Activated T-helper 1 cell treated with anti-CD3 and anti-CD28 coated beads, Interleukin-12 subunit alpha, Interleukin-12 subunit beta, Interleukin-2, Interleukin-4 antibody, amounts not matched to agents 30 ng/mL and 10 ng/mL and 1 ng/mL, durations not matched to agents 14 hours and 24 hours and 36 hours (primary cell): ENCODE measurements at regions of chr2 and their contacts with region 1.

Region 1: DNA sequence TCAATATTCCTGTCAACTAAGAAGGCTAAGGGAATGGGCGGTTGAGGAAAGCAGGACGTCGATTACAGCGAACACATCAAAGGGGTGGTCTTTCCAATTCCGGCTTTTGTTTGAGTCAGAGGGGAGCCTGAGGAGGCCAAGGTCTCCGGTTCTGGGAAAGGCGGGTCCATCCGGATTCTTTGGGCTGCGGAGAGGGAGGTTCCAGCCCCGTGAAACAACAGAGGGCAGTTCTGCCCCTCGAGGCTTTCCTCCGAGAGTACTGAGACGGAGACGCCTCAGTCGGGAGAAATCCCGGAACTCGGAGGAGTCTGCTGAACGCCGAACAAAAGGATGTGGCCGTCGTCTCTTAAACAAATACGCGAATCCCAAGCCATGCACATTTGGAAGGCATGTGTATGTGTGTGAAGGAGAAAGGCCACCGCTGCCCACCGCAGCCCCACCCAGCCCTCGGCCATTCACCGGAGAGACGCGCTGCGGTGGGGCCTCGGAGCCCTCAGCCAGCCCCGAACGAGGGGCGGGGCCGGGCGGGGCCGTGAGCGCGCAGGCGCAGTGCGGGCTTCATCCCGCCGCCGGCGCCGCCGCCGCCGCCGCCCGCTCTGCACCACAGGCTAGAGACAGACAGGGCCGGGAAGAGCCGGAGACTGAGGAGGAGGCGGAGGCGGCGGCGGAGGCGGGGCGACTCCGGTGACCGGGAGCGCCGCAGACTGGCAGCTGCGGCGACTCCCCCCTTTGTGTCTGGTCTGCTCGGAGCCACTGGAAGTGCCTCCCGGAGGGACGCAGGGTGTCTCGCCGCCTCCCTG is at the start of gene BMPR2:
- DNase-seq: peak; percentile 84
- H3K4me3 Mint-ChIP-seq: peak within 1 kb of the TSS; percentile 99
- H3K27ac Mint-ChIP-seq: peak within 1 kb of the TSS; percentile 83
- H3K4me1 Mint-ChIP-seq: peaks cover 31% of the 10 kb centered on the region
- H3K27me3 Mint-ChIP-seq: no peaks in the 10 kb centered on the region
- total RNA-seq, gene BMPR2: 5.5 and 6.1 TPM in 2 replicates

Region 2: DNA sequence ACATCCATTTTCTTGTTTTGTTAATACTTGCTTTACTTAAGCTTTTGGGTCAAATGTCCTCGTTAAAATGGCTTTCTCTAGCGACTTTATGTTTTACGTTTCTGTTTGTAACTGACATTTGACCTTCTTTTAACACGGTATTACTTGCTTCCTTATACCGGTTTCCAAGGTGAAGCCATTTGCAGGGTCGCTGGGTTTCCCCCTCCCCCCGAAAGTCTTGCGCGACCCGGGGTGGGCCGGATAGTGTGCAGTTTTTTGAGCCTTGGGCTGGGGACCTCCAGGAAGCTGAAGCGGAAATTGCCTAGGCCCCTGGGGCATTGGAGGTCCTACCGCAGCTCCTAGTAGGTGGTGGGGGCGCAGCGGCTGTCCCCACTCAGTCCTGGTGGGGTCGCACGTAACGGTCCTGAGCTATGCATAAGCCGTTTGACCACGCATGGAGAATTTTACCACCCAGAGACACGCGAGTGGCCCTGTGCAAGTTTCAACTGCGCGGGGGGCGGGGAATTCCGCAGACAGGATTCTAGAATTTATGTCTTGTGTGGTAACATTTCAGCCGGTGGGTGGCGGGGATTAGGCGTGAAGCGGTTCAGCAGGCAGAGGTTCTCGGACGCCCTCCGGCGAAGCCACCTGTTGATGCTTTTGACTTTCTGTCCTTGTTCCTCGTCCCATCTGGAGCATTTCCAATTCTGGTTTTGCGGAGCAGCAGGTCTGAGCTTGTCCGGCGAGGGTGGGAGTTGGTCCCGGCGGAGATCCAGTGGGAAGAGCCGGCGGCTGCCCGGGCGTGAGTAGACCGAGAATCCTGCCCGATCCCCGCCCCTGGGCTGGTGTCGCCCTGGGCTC is 1257.5 kb before region 1 on chr2:
- intact Hi-C with region 1: loop called (anchors 5 kb)
- DNase-seq: peak; percentile 78
- H3K4me3 Mint-ChIP-seq: peak overlapping the region; percentile 94
- H3K27ac Mint-ChIP-seq: peak overlapping the region; percentile 100
- H3K4me1 Mint-ChIP-seq: peaks cover 65% of the 10 kb centered on the region
- H3K27me3 Mint-ChIP-seq: no peaks in the 10 kb centered on the region

Region 3: DNA sequence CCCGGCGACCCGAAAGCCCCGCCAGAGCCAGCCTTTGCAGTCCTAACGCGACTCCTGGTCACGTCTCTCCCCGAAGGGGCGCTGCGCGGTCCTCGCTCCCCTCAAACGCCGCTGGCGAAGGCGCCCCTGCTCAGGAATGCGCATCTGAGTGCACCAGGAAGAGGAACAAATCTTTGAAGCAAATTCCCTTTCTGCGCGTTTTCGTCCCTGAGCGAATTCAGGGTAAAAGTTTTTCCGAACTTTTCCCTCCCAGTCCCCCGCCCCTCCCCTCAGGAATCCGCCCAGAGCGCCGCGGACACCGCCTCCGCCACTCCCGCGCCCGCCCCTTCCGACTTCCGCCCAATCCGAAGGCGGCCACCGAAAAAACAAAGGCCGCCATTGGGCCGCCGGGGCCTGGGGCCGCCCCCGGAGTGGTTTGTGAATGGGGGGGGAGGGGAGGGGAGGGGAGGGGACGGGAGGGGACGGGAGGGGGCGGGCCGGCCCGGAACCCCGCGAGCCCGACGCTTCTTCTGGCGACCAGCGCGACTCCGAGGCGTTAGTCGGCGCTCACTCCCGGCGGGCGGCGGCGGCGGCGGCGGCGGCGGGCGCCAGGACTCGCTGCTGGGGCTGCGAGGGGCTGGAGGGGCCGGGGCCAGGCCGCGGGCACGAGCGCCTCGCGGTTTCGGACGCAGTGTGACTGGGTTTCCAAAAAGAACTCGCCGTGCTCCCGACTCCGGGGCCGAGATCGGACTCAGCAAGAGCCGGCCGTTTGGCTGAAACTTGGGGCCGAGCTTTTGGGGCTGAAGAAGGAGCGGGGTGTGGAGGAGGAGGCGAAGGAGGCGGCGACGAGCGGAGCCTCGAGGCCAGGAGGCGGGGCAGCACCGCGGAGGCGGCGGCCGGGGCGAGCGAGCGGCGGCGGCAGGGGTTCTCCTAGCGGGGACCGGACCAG is 342.2 kb before region 1 on chr2 and contains the start of gene FZD7:
- intact Hi-C with region 1: loop called (anchors 5 kb)
- DNase-seq: peak; percentile 83
- H3K4me3 Mint-ChIP-seq: peak within 1 kb of the TSS; percentile 89
- H3K27ac Mint-ChIP-seq: peak within 1 kb of the TSS; percentile 63
- H3K4me1 Mint-ChIP-seq: peaks cover 12% of the 10 kb centered on the region
- H3K27me3 Mint-ChIP-seq: peaks cover 44% of the 10 kb centered on the region
- total RNA-seq, gene FZD7: 1.2 and 1.5 TPM in 2 replicates

Region 4: GRCh38 chr2:202265467-202266277 is 110.1 kb before region 1 on chr2 and contains the start of gene NOP58:
- intact Hi-C with region 1: loop called (anchors 1 kb)
- DNase-seq: peak; percentile 91
- H3K4me3 Mint-ChIP-seq: peak within 1 kb of the TSS; percentile 55
- H3K27ac Mint-ChIP-seq: peak within 1 kb of the TSS; percentile 45
- H3K4me1 Mint-ChIP-seq: peaks cover 19% of the 10 kb centered on the region
- H3K27me3 Mint-ChIP-seq: no peaks in the 10 kb centered on the region
- total RNA-seq, gene NOP58: 227 and 241 TPM in 2 replicates

Region 5: DNA sequence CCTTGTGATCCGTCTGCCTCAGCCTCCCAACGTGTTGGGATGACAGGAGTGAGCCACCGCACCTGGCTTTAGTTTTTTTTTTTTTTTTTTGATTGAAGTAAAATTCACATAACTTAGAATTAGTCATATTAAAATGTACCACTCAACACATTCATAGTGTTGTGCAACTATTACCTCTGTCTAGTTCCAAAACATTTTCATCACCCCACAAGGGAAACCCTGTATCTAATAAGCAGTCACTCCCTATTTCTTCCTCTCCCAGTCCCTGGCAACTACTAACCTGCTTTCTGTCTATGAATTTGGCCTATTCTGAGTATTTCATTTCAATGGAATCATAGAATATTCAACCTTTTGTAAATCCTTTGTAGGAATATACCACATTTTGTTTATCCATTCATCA is 135.1 kb after region 1 on chr2:
- intact Hi-C with region 1: no loop called
- DNase-seq: no peak
- H3K4me3 Mint-ChIP-seq: no peak overlapping the region
- H3K27ac Mint-ChIP-seq: no peak overlapping the region
- H3K4me1 Mint-ChIP-seq: no peaks in the 10 kb centered on the region
- H3K27me3 Mint-ChIP-seq: peaks cover 2% of the 10 kb centered on the region

Region 6: DNA sequence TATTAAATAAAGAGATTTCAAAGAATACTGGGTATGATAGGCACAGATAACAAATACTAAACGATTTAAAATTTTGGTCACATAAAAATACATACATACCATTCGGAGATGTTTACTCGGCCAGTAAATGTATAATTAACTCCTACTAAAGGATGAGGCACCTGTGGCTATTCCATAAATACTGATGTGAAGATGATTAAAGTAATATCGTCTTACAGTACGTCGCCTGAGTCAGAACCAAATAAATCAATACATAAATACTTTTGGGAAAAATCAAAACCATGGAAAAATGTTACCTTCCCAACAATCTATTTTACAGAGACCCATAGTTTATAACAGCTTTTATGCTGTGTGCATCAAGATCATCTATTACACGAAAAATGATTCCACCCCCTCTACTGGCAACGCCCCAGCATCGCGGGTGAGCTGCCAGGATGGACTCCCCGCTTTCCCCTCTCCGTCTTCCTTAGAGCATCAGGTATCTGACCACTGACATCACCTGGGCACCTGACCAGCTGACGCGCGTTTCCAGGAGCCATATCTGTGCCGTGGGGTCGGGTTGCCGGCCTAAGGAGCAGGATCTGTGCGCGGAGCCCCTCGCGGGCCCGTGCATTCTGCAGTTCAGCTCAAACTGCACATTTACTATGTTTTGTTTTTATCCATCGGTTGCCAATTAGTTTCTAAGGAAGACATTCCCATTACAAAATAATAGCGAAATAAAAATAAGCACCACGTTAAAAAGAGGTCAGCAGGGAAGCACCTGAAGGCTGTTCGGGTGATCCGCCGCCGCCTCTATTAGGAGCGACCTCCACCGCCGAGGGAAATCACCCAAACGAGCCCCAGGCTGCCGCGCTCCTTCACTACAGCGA is 494.9 kb after region 1 on chr2:
- intact Hi-C with region 1: loop called (anchors 5 kb)
- DNase-seq: peak; percentile 32
- H3K4me3 Mint-ChIP-seq: peak overlapping the region; percentile 90
- H3K27ac Mint-ChIP-seq: peak overlapping the region; percentile 76
- H3K4me1 Mint-ChIP-seq: peaks cover 14% of the 10 kb centered on the region
- H3K27me3 Mint-ChIP-seq: peaks cover 8% of the 10 kb centered on the region

Region 7: DNA sequence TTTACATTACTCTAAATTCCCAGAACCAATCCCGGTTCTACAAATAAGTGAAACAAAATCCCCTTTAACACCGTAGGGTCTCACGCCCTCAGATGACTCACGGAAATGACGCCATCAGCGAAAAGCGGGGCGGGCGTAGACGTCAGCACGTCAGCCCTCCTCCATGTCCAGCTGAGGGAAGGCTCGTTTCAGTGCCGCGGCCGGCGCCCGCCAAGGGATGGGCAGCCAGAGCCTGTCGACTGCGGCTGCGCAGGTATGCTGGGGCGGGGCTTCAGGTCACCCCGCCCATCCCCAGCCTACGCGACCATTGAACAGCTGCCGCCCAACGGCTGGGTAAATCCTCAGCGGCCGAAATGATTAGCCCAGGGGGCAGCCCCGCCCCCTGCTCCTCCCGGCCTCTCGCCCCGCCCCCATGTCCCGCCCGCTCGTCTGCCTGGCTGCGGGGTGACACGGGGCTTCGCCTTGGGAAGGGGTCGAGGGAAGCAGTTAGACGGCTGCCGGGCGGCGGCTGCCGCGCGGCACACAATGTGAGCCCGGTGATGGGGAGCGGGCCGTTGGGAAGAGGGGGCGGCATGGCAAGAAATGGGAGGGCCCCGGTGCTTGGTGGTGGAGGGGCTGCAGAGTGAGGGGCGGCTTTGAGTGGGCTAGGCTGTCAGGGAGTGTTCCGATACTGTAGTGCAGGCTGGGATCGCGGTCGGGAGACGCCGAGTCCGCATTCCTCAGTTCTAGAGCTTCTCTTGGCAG is 638.8 kb after region 1 on chr2 and contains the start of gene NBEAL1:
- intact Hi-C with region 1: loop called (anchors 2 kb)
- DNase-seq: peak; percentile 97
- H3K4me3 Mint-ChIP-seq: peak within 1 kb of the TSS; percentile 94
- H3K27ac Mint-ChIP-seq: peak within 1 kb of the TSS; percentile 87
- H3K4me1 Mint-ChIP-seq: peaks cover 31% of the 10 kb centered on the region
- H3K27me3 Mint-ChIP-seq: peaks cover 4% of the 10 kb centered on the region
- total RNA-seq, gene NBEAL1: 9.2 and 10.7 TPM in 2 replicates